ENCODE measurements at regions of chr12 and their contacts with region 1.

Region 1: GRCh38 chr12:92987362-92987761 is 58.3 kb upstream of the EEA1 start:
- DNase-seq: peak; percentile 87
- ATAC-seq: peak; percentile 77
- H3K4me3 ChIP-seq: no peak overlapping the region
- H3K27ac ChIP-seq: no peak overlapping the region
- H3K4me1 ChIP-seq: peaks cover 7% of the 10 kb centered on the region
- H3K27me3 ChIP-seq: no peaks in the 10 kb centered on the region
- CTCF ChIP-seq: peak; percentile 79

Region 2: GRCh38 chr12:92769124-92769901 is 218.0 kb before region 1 on chr12:
- CTCF ChIA-PET with region 1: no interaction called
- POLR2A ChIA-PET with region 1: no interaction called
- intact Hi-C with region 1: no loop called
- DNase-seq: no peak
- ATAC-seq: no peak
- H3K4me3 ChIP-seq: no peak overlapping the region
- H3K27ac ChIP-seq: no peak overlapping the region
- H3K4me1 ChIP-seq: no peaks in the 10 kb centered on the region
- H3K27me3 ChIP-seq: no peaks in the 10 kb centered on the region
- CTCF ChIP-seq: no peak

Region 3: GRCh38 chr12:93094988-93095737 is 107.8 kb after region 1 on chr12:
- CTCF ChIA-PET with region 1: no interaction called
- POLR2A ChIA-PET with region 1: no interaction called
- intact Hi-C with region 1: loop called (anchors 5 kb)
- DNase-seq: no peak
- ATAC-seq: no peak
- H3K4me3 ChIP-seq: no peak overlapping the region
- H3K27ac ChIP-seq: no peak overlapping the region
- H3K4me1 ChIP-seq: peaks cover 28% of the 10 kb centered on the region
- H3K27me3 ChIP-seq: no peaks in the 10 kb centered on the region
- CTCF ChIP-seq: no peak

Region 4: DNA sequence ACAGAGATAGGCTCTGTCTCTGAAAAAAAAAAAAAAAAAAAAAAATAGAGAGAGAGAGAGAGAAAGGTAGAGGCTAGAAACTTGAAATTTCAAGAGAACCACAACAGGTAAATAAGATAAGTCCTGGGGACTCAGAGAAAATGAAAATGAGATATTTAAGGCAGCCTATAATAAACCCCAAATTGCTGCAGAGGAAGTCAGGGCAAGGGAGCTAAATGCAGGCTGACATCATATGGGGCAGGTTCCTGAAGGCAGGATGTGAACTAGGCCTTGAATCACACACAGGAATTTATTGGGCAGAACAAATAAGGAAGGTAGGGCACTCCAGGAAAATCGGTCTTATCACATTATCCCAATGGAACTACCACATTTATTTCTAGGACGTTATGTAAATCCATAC is 335.4 kb after region 1 on chr12:
- CTCF ChIA-PET with region 1: no interaction called
- POLR2A ChIA-PET with region 1: no interaction called
- intact Hi-C with region 1: loop called (anchors 5 kb)
- DNase-seq: peak; percentile 80
- ATAC-seq: peak; percentile 94
- H3K4me3 ChIP-seq: no peak overlapping the region
- H3K27ac ChIP-seq: no peak overlapping the region; the same call in 1 of the 2 replicates
- H3K4me1 ChIP-seq: peaks cover 24% of the 10 kb centered on the region
- H3K27me3 ChIP-seq: no peaks in the 10 kb centered on the region
- CTCF ChIP-seq: no peak